Thyroid gland (tissue), 4 donors: ENCODE measurements at regions of chr6 and their contacts with region 1.

Region 1: GRCh38 chr6:50816115-50816675 is 2.5 kb upstream of the TFAP2B start:
- DNase-seq: peak; percentile 58 to 72
- H3K4me3 ChIP-seq: peak overlapping the region in 1 of 3 donors; percentile 8
- H3K27ac ChIP-seq: no peak overlapping the region
- H3K4me1 ChIP-seq: peaks cover 10 to 15% of the 10 kb centered on the region in 2 donors
- H3K27me3 ChIP-seq: peaks cover 25% of the 10 kb centered on the region
- CTCF ChIP-seq: peak; percentile 40 to 84 (median 67)
- POLR2A ChIP-seq: no peak

Region 2: DNA sequence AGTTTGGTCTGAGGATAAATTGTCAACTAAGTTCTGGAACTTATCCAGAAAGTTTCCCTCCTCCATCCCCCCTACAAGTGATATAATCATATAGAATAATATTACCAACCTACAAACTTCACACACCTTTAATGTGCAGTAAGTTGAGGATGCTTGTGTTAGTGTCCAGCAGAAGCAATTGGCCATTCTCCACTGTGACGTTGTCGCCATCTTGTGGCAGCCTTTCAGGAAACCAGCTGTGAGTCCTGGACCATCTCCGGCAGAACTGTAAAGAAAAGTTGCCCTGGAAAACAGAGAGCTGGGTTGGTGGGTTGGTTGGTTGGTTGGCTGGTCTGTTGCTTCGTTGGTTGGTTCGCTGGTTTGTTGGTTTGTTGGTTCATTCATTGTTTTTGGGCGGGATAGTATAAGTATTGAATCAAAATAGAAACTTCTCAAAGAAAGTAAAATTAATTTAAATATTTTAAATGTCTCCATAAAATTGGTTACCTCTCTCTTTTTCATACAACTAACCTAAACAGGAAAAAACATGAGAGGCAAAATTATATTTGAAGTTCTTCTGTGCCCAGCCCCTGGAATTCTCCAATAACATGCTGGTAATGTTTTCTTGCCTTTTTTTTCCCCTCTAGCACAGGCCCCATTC is 1143.7 kb after region 1 on chr6:
- intact Hi-C with region 1: loop called (anchors 5 kb)
- DNase-seq: peak; percentile 57 to 71
- H3K4me3 ChIP-seq: no peak overlapping the region
- H3K27ac ChIP-seq: no peak overlapping the region
- H3K4me1 ChIP-seq: no peaks in the 10 kb centered on the region
- H3K27me3 ChIP-seq: no peaks in the 10 kb centered on the region
- CTCF ChIP-seq: peak in 5 of 6 experiments; percentile 13 to 66 (median 52)
- POLR2A ChIP-seq: no peak